ENCODE measurements at regions of chr15 and their contacts with region 1.

Region 1: DNA sequence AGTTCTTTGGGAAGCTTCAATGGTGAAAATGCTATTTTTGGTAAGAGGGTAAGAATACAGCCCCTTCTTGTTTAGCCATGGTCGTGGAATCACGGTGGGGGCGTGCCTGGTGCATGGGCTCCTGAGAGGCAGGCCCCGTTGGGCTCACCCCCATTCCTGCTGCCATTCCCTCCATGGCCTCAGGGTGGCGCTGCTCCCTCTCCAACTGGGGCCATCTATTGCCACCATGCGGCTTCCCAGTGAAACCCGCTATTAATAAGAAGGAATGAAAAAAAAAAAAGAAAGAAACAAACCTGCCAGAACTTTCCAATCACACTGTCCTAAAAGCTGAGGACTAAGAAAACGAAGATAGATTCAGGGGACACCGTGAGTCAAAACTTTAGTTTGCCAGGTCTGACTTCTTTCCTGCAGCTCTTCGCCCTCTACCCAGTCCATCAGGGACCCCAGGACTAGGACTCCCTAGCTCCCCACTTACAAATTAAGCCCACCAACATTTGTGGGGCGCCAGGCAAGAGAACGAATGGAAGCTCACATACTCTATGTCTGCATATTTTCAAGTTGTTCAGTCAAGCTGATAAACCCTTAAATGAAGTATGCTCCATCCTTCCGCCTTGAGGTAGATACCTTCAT is 30.6 kb upstream of the ABHD2 start:
- DNase-seq: peak; percentile 65 to 89 (median 80)
- ATAC-seq: peak; percentile 97
- H3K4me3 ChIP-seq: no peak overlapping the region
- H3K4me3 Mint-ChIP-seq: no peak overlapping the region
- H3K27ac ChIP-seq: no peak overlapping the region
- H3K27ac Mint-ChIP-seq: no peak overlapping the region
- H3K4me1 ChIP-seq: peaks cover 8% of the 10 kb centered on the region
- H3K4me1 Mint-ChIP-seq: peaks cover 4% of the 10 kb centered on the region
- H3K27me3 ChIP-seq: no peaks in the 10 kb centered on the region
- H3K27me3 Mint-ChIP-seq: no peaks in the 10 kb centered on the region
- CTCF ChIP-seq: peak; percentile 95

Region 2: GRCh38 chr15:89129123-89129815 is 71.7 kb after region 1 on chr15:
- CTCF ChIA-PET with region 1: interaction called, 18 read pairs
- POLR2A ChIA-PET with region 1: interaction called, 3 read pairs
- intact Hi-C with region 1: loop called (anchors 1 kb)
- DNase-seq: peak; percentile 36 to 78 (median 55)
- ATAC-seq: peak; percentile 66
- H3K4me3 ChIP-seq: no peak overlapping the region
- H3K4me3 Mint-ChIP-seq: no peak overlapping the region
- H3K27ac ChIP-seq: no peak overlapping the region
- H3K27ac Mint-ChIP-seq: no peak overlapping the region
- H3K4me1 ChIP-seq: peaks cover 14% of the 10 kb centered on the region
- H3K4me1 Mint-ChIP-seq: peaks cover 16% of the 10 kb centered on the region
- H3K27me3 ChIP-seq: no peaks in the 10 kb centered on the region
- H3K27me3 Mint-ChIP-seq: no peaks in the 10 kb centered on the region
- CTCF ChIP-seq: peak; percentile 82

Region 3: GRCh38 chr15:89171136-89172072 is 113.8 kb after region 1 on chr15:
- CTCF ChIA-PET with region 1: interaction called, 16 read pairs
- POLR2A ChIA-PET with region 1: no interaction called
- intact Hi-C with region 1: no loop called
- DNase-seq: peak in 9 of 14 experiments; percentile 2 to 53 (median 6)
- ATAC-seq: peak; percentile 48
- H3K4me3 ChIP-seq: no peak overlapping the region
- H3K4me3 Mint-ChIP-seq: no peak overlapping the region
- H3K27ac ChIP-seq: no peak overlapping the region
- H3K27ac Mint-ChIP-seq: no peak overlapping the region
- H3K4me1 ChIP-seq: peaks cover 3% of the 10 kb centered on the region
- H3K4me1 Mint-ChIP-seq: no peaks in the 10 kb centered on the region
- H3K27me3 ChIP-seq: no peaks in the 10 kb centered on the region
- H3K27me3 Mint-ChIP-seq: no peaks in the 10 kb centered on the region
- CTCF ChIP-seq: peak; percentile 66

Region 4: GRCh38 chr15:89177633-89178306 is 120.2 kb after region 1 on chr15:
- CTCF ChIA-PET with region 1: interaction called, 16 read pairs
- POLR2A ChIA-PET with region 1: no interaction called
- intact Hi-C with region 1: loop called (anchors 1 kb)
- DNase-seq: peak; percentile 32 to 82 (median 52)
- ATAC-seq: peak; percentile 75
- H3K4me3 ChIP-seq: no peak overlapping the region
- H3K4me3 Mint-ChIP-seq: no peak overlapping the region
- H3K27ac ChIP-seq: no peak overlapping the region
- H3K27ac Mint-ChIP-seq: no peak overlapping the region
- H3K4me1 ChIP-seq: peaks cover 4% of the 10 kb centered on the region
- H3K4me1 Mint-ChIP-seq: peaks cover 8% of the 10 kb centered on the region
- H3K27me3 ChIP-seq: no peaks in the 10 kb centered on the region
- H3K27me3 Mint-ChIP-seq: no peaks in the 10 kb centered on the region
- CTCF ChIP-seq: peak; percentile 77

Region 5: GRCh38 chr15:89430530-89431341 is 373.1 kb after region 1 on chr15:
- CTCF ChIA-PET with region 1: no interaction called
- POLR2A ChIA-PET with region 1: no interaction called
- intact Hi-C with region 1: loop called in 1 of 2 experiments (anchors 5 kb)
- DNase-seq: peak; percentile 71 to 95 (median 88)
- ATAC-seq: peak; percentile 94
- H3K4me3 ChIP-seq: peak overlapping the region; percentile 56
- H3K4me3 Mint-ChIP-seq: peak overlapping the region; percentile 68
- H3K27ac ChIP-seq: no peak overlapping the region
- H3K27ac Mint-ChIP-seq: no peak overlapping the region
- H3K4me1 ChIP-seq: peaks cover 9% of the 10 kb centered on the region
- H3K4me1 Mint-ChIP-seq: no peaks in the 10 kb centered on the region
- H3K27me3 ChIP-seq: peaks cover 2 to 11% of the 10 kb centered on the region in 2 experiments
- H3K27me3 Mint-ChIP-seq: peaks cover 31% of the 10 kb centered on the region
- CTCF ChIP-seq: peak; percentile 97